ENCODE measurements at regions of chr15 and their contacts with region 1.

Region 1: DNA sequence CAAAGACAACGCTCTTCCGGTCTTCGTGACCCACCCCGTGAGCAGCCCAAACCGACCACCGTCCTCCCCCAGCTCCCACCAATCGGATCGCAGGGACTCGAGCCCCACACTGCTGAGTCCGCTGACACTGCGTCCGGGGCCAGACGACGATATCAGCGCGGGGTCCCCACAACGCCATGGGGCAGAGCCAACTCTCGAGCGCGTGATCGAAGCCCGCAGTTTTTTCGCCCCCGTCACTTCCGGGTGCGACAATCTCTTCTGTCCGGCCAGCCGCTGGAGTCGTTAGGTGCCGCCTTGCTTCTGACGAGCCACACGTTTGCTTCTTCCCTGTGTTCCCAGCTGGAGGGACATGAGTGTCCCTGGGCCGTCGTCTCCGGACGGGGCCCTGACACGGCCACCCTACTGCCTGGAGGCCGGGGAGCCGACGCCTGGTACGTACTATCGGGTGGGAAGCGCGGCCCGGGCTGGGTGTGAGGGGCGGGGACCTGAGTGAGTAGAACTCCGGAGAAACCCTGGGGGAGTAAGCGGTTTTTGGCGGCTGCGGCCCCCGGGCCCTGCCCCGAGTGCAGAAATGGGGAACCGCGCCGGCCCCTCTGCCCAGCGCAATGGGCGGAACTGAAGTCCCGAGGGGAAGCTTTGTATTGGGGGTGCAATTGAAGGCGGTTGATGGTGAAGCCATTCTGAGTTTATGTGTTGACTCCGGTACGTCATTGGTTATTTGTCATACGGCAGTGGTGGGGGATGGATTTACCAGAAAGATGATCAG is at the start of gene BLOC1S6:
- DNase-seq: peak; percentile 81
- ATAC-seq: peak; percentile 76
- H3K4me3 ChIP-seq: peak within 1 kb of the TSS; percentile 98
- H3K27ac ChIP-seq: peak within 1 kb of the TSS; percentile 93
- H3K4me1 ChIP-seq: peaks cover 32% of the 10 kb centered on the region
- H3K27me3 ChIP-seq: no peaks in the 10 kb centered on the region
- CTCF ChIP-seq: no peak
- total RNA-seq, gene BLOC1S6: 28.6 and 40.1 TPM in 2 replicates

Region 2: GRCh38 chr15:45265506-45265905 is 321.8 kb before region 1 on chr15:
- CTCF ChIA-PET with region 1: no interaction called
- POLR2A ChIA-PET with region 1: no interaction called
- intact Hi-C with region 1: no loop called
- DNase-seq: peak; percentile 55
- ATAC-seq: no peak
- H3K4me3 ChIP-seq: no peak overlapping the region
- H3K27ac ChIP-seq: no peak overlapping the region
- H3K4me1 ChIP-seq: no peaks in the 10 kb centered on the region
- H3K27me3 ChIP-seq: no peaks in the 10 kb centered on the region
- CTCF ChIP-seq: no peak

Region 3: GRCh38 chr15:45549541-45550220 is 37.6 kb before region 1 on chr15:
- CTCF ChIA-PET with region 1: no interaction called
- POLR2A ChIA-PET with region 1: no interaction called
- intact Hi-C with region 1: loop called (anchors 1 kb)
- DNase-seq: peak; percentile 84
- ATAC-seq: peak; percentile 94
- H3K4me3 ChIP-seq: 0 out of 2 replicates have a peak overlapping the region, but pooled peaks have one; percentile 3
- H3K27ac ChIP-seq: peak overlapping the region; percentile 70
- H3K4me1 ChIP-seq: peaks cover 7% of the 10 kb centered on the region
- H3K27me3 ChIP-seq: no peaks in the 10 kb centered on the region
- CTCF ChIP-seq: no peak

Region 4: DNA sequence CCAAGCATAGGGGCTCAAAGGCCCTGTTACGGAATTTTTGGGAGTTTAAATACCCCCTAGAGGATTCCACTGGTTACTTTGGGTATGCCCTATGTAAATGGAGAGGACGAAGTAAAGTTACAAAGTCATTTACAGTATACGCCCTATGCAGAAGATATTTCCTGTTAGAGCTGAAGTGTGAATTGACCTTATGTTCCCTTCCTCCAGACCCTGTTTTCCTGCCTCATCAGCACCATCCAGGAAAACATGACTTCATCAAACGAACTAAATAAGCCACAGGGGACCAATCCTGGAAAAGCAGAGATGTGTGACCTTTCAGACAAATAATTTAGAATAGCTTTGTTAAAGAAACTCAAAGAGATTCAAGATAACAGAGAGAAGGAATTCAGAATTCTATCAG is 224.9 kb after region 1 on chr15:
- CTCF ChIA-PET with region 1: no interaction called
- POLR2A ChIA-PET with region 1: no interaction called
- intact Hi-C with region 1: no loop called
- DNase-seq: no peak
- ATAC-seq: no peak
- H3K4me3 ChIP-seq: no peak overlapping the region
- H3K27ac ChIP-seq: no peak overlapping the region
- H3K4me1 ChIP-seq: no peaks in the 10 kb centered on the region
- H3K27me3 ChIP-seq: no peaks in the 10 kb centered on the region
- CTCF ChIP-seq: no peak

Region 5: GRCh38 chr15:45871121-45871985 is 284.1 kb after region 1 on chr15:
- CTCF ChIA-PET with region 1: no interaction called
- POLR2A ChIA-PET with region 1: no interaction called
- intact Hi-C with region 1: no loop called
- DNase-seq: peak; percentile 76
- ATAC-seq: peak; percentile 60
- H3K4me3 ChIP-seq: peak overlapping the region; percentile 29; the same call in 1 of the 2 replicates
- H3K27ac ChIP-seq: peak overlapping the region; percentile 85
- H3K4me1 ChIP-seq: peaks cover 43% of the 10 kb centered on the region
- H3K27me3 ChIP-seq: no peaks in the 10 kb centered on the region
- CTCF ChIP-seq: no peak; the same call in 1 of the 2 replicates

Measured in PC-3 (cell line).